K562 (cell line): ENCODE measurements at regions of chr12 and their contacts with region 1.

Region 1: GRCh38 chr12:68610370-68611093 is at the start of gene RAP1B:
- DNase-seq: peak; percentile 93 to 96 (median 95)
- ATAC-seq: peak; percentile 87
- H3K4me3 ChIP-seq: peak within 1 kb of the TSS; percentile 92
- H3K27ac ChIP-seq: peak within 1 kb of the TSS; percentile 97
- H3K4me1 ChIP-seq: peaks cover 14 to 28% of the 10 kb centered on the region in 2 experiments
- H3K27me3 ChIP-seq: no peaks in the 10 kb centered on the region
- CTCF ChIP-seq: no peak
- EP300 ChIP-seq: no peak
- POLR2A ChIP-seq: peak; percentile 94
- RAD21 ChIP-seq: no peak
- polyA plus RNA-seq, gene RAP1B: 107 to 116 TPM

Region 2: GRCh38 chr12:68364893-68365725 is 245.4 kb before region 1 on chr12:
- CTCF ChIA-PET with region 1: no interaction called
- POLR2A ChIA-PET with region 1: no interaction called
- in situ Hi-C with region 1: no loop called
- intact Hi-C with region 1: loop called (anchors 5 kb)
- DNase-seq: peak; percentile 93 to 96 (median 94)
- ATAC-seq: peak; percentile 97
- H3K4me3 ChIP-seq: peak overlapping the region; percentile 31
- H3K27ac ChIP-seq: peak overlapping the region; percentile 80
- H3K4me1 ChIP-seq: peaks cover 10 to 49% of the 10 kb centered on the region in 2 experiments
- H3K27me3 ChIP-seq: no peaks in the 10 kb centered on the region
- CTCF ChIP-seq: no peak
- EP300 ChIP-seq: peak; percentile 69
- POLR2A ChIP-seq: peak; percentile 78
- RAD21 ChIP-seq: peak; percentile 29 to 33; a peak in 3 of 4 replicates

Region 3: GRCh38 chr12:68633614-68634529 is 23.3 kb after region 1 on chr12:
- CTCF ChIA-PET with region 1: no interaction called
- POLR2A ChIA-PET with region 1: interaction called, 6 read pairs
- in situ Hi-C with region 1: no loop called
- intact Hi-C with region 1: loop called (anchors 1 kb)
- DNase-seq: no peak
- ATAC-seq: no peak
- H3K4me3 ChIP-seq: no peak overlapping the region
- H3K27ac ChIP-seq: no peak overlapping the region
- H3K4me1 ChIP-seq: no peaks in the 10 kb centered on the region; a peak in 1 of 5 replicates
- H3K27me3 ChIP-seq: no peaks in the 10 kb centered on the region
- CTCF ChIP-seq: no peak
- EP300 ChIP-seq: no peak
- POLR2A ChIP-seq: no peak
- RAD21 ChIP-seq: no peak

Region 4: GRCh38 chr12:68665016-68665569 is 54.6 kb after region 1 on chr12:
- CTCF ChIA-PET with region 1: no interaction called
- POLR2A ChIA-PET with region 1: no interaction called
- in situ Hi-C with region 1: no loop called
- intact Hi-C with region 1: loop called (anchors 5 kb)
- DNase-seq: peak in 2 of 4 experiments; percentile 11 to 13
- ATAC-seq: peak; percentile 68
- H3K4me3 ChIP-seq: no peak overlapping the region
- H3K27ac ChIP-seq: no peak overlapping the region
- H3K4me1 ChIP-seq: no peaks in the 10 kb centered on the region; a peak in 1 of 5 replicates
- H3K27me3 ChIP-seq: no peaks in the 10 kb centered on the region
- CTCF ChIP-seq: peak in 2 of 3 experiments; percentile 17 to 42; a peak in 3 of 6 replicates
- EP300 ChIP-seq: no peak
- POLR2A ChIP-seq: peak; percentile 7
- RAD21 ChIP-seq: peak; percentile 20 to 58; a peak in 3 of 4 replicates

Region 5: DNA sequence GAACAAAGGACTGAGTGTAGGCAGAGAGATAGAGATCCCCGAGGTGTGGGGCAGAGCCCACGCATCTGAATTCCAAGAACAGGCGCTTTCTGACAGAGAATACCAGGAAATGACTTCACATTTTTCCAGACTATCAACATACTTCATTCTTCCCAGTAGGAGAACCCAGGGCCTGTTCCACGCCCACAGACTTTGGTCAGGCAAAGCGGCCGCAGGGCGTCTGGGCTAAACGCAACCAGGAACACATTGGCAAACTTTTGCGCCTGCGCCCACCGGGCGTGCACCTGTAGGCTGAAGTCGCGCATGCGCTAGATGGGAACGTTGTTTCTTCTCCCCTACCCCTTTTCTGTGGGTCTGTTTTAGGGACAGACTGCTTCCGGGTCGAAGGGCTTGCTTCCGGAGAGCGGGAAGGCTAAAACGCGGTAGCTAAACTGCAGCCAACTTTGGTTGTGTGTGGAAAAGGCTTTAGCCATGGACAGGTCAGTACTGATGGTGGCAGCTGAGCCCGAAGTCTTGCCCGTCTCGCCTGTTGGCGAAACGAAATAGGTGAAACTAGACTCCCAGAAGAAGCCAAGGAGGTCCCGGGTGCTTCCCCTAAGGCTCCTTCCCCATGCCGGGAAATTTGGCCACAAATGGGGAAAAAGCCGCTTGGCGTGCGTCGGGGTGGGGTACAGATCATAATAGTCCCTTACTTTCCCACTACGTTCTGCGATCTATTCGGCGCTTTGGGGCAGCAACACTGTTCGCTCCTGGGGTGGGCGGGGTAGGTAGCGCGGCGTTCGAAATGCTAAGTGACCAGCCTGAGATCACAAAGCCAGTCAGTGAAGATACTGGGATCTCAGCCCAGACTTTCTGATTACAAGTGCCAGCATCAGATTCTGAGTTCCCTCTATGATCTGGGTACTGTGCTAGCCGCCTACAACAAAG is 76.3 kb after region 1 on chr12 and contains the start of gene NUP107:
- CTCF ChIA-PET with region 1: no interaction called
- POLR2A ChIA-PET with region 1: no interaction called
- in situ Hi-C with region 1: no loop called
- intact Hi-C with region 1: loop called (anchors 2 kb)
- DNase-seq: peak; percentile 95 to 100 (median 98)
- ATAC-seq: peak; percentile 95
- H3K4me3 ChIP-seq: peak within 1 kb of the TSS; percentile 85
- H3K27ac ChIP-seq: peak within 1 kb of the TSS; percentile 98
- H3K4me1 ChIP-seq: peaks cover 5 to 14% of the 10 kb centered on the region in 2 experiments; a peak in 3 of 5 replicates
- H3K27me3 ChIP-seq: no peaks in the 10 kb centered on the region
- CTCF ChIP-seq: 0 out of 6 replicates have a peak, but pooled peaks of 2 of the 3 experiments have one; percentile 6 to 19
- EP300 ChIP-seq: peak; percentile 88
- POLR2A ChIP-seq: peak; percentile 90
- RAD21 ChIP-seq: peak; percentile 27 to 34; a peak in 3 of 4 replicates
- polyA plus RNA-seq, gene NUP107: 162 to 218 TPM